ENCODE measurements at regions of chr7 and their contacts with region 1.

Region 1: DNA sequence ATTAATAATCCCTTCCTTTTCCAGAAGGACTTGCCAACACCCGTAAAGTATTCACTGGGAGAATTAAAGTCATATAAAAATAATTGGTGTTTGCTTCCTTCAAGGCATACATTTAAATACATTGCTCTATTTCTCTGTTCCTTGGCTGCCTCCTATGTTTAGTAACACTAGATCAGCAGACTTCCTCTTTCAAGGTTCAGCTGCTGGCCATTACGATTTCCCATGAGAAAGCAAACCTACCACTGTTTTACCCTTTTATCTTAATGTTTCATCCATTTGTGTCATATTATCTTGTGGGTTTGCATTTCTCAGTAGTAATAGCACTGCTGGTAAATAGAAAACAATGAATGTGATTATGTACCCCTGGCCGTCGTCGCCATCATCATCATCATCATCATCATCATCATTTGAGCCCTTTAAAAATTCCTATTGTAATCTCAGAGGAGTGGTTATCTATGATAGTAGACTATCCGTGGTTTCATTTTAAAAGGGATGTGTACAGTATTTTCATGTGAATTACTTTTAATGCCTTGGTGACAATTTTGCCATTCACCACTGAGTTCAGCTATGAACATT is 313.8 kb upstream of the BMPER start:
- DNase-seq: no peak
- ATAC-seq: no peak
- H3K4me3 ChIP-seq: no peak overlapping the region
- H3K27ac ChIP-seq: no peak overlapping the region
- H3K4me1 ChIP-seq: peaks cover 0 to 8% (median 0%) of the 10 kb centered on the region in 12 donors
- H3K27me3 ChIP-seq: no peaks in the 10 kb centered on the region
- CTCF ChIP-seq: no peak
- POLR2A ChIP-seq: no peak

Region 2: DNA sequence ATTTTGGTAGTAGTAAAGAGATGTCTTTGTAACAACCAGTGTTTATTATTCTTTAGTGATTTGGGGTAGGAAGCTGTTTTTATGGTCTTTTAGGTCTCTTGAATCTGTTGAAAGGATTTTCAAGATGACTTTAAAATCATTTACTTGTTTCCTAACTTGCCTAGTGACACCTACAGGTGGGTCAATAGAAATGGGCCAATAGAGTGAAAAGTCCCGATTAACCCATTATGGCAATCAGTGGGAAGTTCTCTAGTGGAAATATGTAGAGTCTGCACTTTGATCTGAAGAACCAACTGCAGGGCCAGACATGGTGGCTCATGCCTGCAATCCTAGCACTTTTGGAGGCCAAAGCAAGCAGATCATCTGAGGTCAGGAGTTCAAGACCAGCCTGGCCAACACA is 60.9 kb before region 1 on chr7:
- intact Hi-C with region 1: no loop called
- DNase-seq: no peak
- ATAC-seq: no peak
- H3K4me3 ChIP-seq: no peak overlapping the region
- H3K27ac ChIP-seq: no peak overlapping the region
- H3K4me1 ChIP-seq: peaks cover 0 to 3% (median 0%) of the 10 kb centered on the region in 12 donors
- H3K27me3 ChIP-seq: no peaks in the 10 kb centered on the region
- CTCF ChIP-seq: no peak
- POLR2A ChIP-seq: no peak

Region 3: DNA sequence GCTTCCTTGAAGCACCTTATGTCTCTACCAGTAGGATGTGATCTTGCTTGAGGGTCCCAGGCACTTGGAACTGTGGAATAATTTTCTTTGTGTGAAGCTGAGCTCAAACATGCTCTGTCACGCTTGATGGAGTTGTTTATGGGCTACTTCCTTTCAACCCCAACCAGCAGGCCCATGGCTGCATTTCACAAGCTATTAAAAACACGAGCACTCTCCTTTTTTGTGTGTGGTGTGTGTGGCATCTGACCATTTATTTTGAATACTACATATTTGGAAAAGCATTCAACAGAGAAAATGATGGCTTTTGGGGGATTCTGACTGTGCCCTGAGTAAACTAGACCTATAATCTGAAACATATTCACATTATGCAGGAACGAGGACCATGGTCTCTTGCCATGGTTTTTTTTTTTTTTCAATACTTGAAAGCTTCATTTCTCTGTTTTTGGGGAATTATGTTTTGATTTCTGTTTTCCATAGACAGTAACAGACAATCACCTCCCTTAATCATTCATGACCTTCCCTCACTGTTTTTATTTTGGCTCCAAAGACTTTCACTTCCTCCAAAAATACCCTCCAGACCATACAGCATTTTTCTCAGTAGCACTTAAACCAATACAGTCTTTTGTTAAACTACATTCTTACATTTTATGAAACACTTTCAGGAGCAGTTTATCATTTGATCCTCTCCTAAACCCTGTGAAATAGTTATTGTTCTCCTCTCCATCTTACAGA is 80.1 kb after region 1 on chr7:
- intact Hi-C with region 1: loop called in 1 of 10 experiments (anchors 5 kb)
- DNase-seq: no peak
- ATAC-seq: no peak
- H3K4me3 ChIP-seq: no peak overlapping the region
- H3K27ac ChIP-seq: no peak overlapping the region
- H3K4me1 ChIP-seq: no peaks in the 10 kb centered on the region
- H3K27me3 ChIP-seq: no peaks in the 10 kb centered on the region
- CTCF ChIP-seq: no peak
- POLR2A ChIP-seq: no peak